ENCODE measurements at regions of chr19 and their contacts with region 1.

Region 1: DNA sequence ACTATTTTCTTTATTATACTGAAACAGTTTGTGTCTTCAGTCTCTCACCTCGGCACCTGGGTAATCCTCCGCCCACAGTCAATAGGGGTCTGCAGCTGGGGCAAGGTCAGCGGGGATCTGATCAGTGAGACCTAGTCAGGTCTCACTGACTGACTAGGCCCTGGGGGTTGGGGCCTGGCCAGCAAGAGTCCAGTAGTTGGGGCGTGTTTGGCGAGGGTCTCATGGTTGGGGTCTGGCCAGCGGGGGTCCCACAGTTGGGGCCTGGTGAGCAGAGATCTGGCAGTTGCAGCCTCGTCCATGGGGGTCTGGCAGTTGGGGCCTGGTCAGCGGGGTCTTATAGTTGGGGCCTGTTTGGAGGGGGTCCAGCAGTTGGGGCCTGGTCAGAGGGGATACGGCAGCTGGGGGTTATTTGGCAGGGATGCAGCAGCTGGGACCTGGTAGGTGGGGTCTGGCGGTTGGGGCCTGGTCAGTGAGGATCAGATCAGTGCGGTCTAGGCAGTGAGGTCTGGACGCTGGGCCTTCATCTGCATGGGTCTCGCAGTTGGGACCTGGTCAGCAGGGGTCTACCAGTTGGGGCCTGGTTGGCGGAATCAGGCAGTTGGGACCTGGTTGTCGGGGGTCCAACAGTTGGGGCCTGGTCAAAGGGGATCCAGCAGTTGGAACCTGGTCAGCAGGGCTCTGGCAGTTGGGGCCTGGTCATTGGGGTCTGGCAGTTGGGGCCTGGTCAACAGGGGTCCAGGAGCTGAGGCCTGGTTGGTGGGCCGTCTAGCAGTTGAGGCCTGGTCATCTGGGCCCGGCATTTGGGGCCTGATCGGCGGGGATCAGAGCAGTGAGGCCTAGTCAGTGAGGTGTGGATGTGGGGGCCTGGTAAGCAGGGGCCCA is 61.1 kb upstream of the TPM4 start:
- DNase-seq: no peak
- H3K27ac ChIP-seq: no peak overlapping the region
- CTCF ChIP-seq: no peak

Region 2: GRCh38 chr19:15864824-15865223 is 150.3 kb before region 1 on chr19:
- CTCF ChIA-PET with region 1: interaction called, 3 read pairs
- POLR2A ChIA-PET with region 1: interaction called, 15 read pairs
- DNase-seq: no peak
- H3K27ac ChIP-seq: no peak overlapping the region
- CTCF ChIP-seq: no peak